Activated CD8-positive, alpha-beta memory T cell treated with anti-CD3 and anti-CD28 coated beads, Interleukin-2, amount 10 ng/mL, durations not matched to agents 7 days and 5 days (primary cell): ENCODE measurements at regions of chr13 and their contacts with region 1.

Region 1: GRCh38 chr13:99436686-99437416 is 64.4 kb upstream of the TM9SF2 start:
- DNase-seq: peak; percentile 97
- ATAC-seq: peak; percentile 70
- H3K4me3 Mint-ChIP-seq: peak overlapping the region; percentile 12
- H3K27ac Mint-ChIP-seq: peak overlapping the region; percentile 81
- H3K4me1 Mint-ChIP-seq: peaks cover 68% of the 10 kb centered on the region
- H3K27me3 Mint-ChIP-seq: peaks cover 17% of the 10 kb centered on the region

Region 2: DNA sequence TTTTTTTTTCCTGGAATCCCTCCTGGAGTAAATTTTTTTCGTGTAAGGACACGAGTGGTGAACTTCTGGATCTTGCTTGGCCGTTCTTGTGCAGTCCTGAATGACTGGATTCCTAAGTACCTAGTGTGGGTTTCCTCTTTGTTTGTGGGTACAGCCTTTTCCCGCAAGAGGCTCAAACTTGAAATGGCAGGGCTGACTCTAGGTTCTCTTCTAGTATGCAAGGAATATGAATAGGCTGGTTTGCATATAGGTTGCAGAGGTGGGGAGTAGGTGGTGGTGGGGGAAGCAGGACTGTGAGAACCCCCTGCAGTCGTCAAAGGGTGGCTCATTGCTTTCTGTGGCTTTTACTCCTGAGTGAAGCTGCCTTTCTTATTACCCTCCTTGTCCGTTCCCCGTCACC is 222.6 kb before region 1 on chr13:
- CTCF ChIA-PET with region 1: interaction called, 11 read pairs
- DNase-seq: peak; percentile 62
- ATAC-seq: peak; percentile 23
- H3K4me3 Mint-ChIP-seq: peak overlapping the region; percentile 73
- H3K27ac Mint-ChIP-seq: peak overlapping the region; percentile 94
- H3K4me1 Mint-ChIP-seq: peaks cover 72% of the 10 kb centered on the region
- H3K27me3 Mint-ChIP-seq: no peaks in the 10 kb centered on the region

Region 3: GRCh38 chr13:99281811-99282263 is 155.0 kb before region 1 on chr13:
- CTCF ChIA-PET with region 1: interaction called, 280 read pairs
- DNase-seq: peak; percentile 67
- ATAC-seq: peak; percentile 52
- H3K4me3 Mint-ChIP-seq: no peak overlapping the region
- H3K27ac Mint-ChIP-seq: peak overlapping the region; percentile 35
- H3K4me1 Mint-ChIP-seq: peaks cover 85% of the 10 kb centered on the region
- H3K27me3 Mint-ChIP-seq: no peaks in the 10 kb centered on the region

Region 4: DNA sequence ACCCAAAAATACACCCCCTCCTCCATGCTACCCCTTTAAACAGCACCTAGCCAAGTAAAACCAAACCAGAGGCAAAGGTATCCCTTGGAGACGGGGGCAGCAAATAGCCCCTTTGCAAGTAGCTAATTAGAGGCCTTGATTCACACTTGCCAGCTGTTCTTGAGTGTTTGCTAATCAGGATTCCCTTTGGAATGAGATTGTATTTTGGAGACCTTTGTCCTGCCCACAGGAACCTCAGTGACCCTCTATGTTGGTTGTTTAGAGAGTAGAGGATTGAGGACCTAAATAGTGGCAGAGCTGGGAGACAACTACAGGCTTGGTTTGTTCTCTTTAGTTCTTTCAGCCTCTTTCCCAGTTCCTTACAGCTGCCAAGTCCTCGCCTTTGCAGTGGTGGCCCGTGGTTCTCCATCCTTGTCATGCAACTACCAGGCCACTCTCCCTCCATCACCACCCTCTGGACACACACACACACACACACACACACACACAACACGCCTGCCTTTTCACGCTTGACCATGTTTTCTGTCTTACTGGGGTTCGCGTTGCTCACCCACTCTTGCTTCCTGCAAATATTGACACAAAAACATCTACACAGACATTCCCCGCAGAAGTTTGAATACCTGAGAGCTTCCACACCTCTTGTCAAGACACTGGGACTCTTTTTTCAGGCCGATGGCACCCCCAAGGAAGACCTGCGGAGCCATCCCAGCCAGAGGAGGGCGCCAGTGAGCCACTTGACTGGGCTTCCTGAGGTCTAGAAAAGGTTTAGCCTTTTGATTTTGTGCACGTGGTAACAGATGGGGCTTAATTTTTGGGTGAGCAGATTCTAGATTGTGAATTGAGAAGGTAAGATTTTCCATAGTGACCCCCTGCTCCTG is 49.7 kb before region 1 on chr13:
- CTCF ChIA-PET with region 1: interaction called, 208 read pairs
- DNase-seq: peak; percentile 87
- ATAC-seq: peak; percentile 65
- H3K4me3 Mint-ChIP-seq: no peak overlapping the region
- H3K27ac Mint-ChIP-seq: peak overlapping the region; percentile 25
- H3K4me1 Mint-ChIP-seq: peaks cover 37% of the 10 kb centered on the region
- H3K27me3 Mint-ChIP-seq: no peaks in the 10 kb centered on the region

Region 5: DNA sequence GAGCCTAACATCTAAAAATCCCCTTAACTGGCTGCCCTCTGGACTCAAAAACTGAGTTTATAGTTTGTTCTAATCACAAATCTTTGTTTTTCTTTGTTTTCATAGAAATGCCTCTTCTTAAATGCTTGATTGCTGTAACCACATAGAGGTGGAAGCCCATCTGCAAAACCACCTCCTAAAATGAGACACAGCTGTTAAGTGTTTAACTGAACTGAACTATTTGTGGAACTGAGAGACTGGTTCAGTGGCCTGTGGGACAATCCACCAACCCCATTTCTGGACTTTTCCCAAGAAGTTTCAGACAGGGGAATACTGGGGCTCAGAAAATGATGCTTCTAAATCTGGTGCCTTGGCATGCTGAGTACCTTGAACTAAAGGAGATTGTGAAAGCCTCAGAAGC is 13.6 kb after region 1 on chr13:
- CTCF ChIA-PET with region 1: interaction called, 10 read pairs
- DNase-seq: no peak
- ATAC-seq: no peak
- H3K4me3 Mint-ChIP-seq: no peak overlapping the region
- H3K27ac Mint-ChIP-seq: peak overlapping the region; percentile 16
- H3K4me1 Mint-ChIP-seq: peaks cover 55% of the 10 kb centered on the region
- H3K27me3 Mint-ChIP-seq: no peaks in the 10 kb centered on the region